ENCODE measurements at regions of chr7 and their contacts with region 1.

Region 1: GRCh38 chr7:40329601-40330153 is 194.9 kb downstream of the SUGCT start:
- DNase-seq: peak; percentile 9 to 52
- H3K4me3 ChIP-seq: no peak overlapping the region
- H3K27ac ChIP-seq: no peak overlapping the region
- H3K4me1 ChIP-seq: no peaks in the 10 kb centered on the region; the same call in 1 of the 2 replicates
- H3K27me3 ChIP-seq: no peaks in the 10 kb centered on the region
- CTCF ChIP-seq: peak; percentile 98

Region 2: DNA sequence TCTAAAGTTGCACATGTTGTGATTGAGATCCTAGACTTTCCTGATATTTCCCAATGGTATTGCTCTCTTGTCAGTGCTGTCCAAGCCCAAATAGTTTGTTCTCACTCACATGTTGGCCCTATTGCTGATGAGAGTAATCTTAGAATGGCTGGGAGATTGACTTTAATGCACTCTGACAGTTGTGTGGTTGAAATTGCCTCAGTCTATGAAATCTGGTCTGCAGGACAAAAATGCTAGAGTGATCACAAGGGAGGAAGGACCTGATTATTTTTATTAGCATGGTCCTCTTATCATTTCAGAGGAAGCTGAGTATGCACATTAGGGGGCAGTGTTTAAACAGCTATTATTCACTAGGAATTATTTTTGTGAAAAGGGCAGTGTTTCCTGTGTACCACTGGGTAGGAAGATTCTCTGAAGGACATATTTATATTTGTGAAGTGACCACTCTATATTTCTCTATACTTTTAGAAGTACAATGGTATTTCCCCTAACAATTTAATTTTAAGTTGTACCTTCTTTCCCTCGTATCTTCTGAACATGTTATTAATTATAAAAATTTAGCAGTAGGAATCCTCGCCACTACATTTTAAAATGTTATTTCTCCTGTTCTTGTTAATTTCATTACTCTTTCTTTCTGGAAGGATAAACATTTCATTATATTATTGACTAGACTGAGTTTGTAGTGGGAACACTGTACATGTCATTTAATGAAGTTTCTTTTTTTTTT is 130.4 kb before region 1 on chr7:
- CTCF ChIA-PET with region 1: no interaction called
- POLR2A ChIA-PET with region 1: no interaction called
- intact Hi-C with region 1: loop called (anchors 1 kb)
- DNase-seq: peak in 1 of 2 experiments; percentile 33
- H3K4me3 ChIP-seq: no peak overlapping the region
- H3K27ac ChIP-seq: no peak overlapping the region
- H3K4me1 ChIP-seq: no peaks in the 10 kb centered on the region
- H3K27me3 ChIP-seq: no peaks in the 10 kb centered on the region
- CTCF ChIP-seq: peak; percentile 59

Region 3: GRCh38 chr7:40604601-40605438 is 275.1 kb after region 1 on chr7:
- CTCF ChIA-PET with region 1: no interaction called
- POLR2A ChIA-PET with region 1: no interaction called
- intact Hi-C with region 1: no loop called
- DNase-seq: no peak
- H3K4me3 ChIP-seq: no peak overlapping the region
- H3K27ac ChIP-seq: no peak overlapping the region
- H3K4me1 ChIP-seq: no peaks in the 10 kb centered on the region
- H3K27me3 ChIP-seq: no peaks in the 10 kb centered on the region
- CTCF ChIP-seq: no peak

Region 4: DNA sequence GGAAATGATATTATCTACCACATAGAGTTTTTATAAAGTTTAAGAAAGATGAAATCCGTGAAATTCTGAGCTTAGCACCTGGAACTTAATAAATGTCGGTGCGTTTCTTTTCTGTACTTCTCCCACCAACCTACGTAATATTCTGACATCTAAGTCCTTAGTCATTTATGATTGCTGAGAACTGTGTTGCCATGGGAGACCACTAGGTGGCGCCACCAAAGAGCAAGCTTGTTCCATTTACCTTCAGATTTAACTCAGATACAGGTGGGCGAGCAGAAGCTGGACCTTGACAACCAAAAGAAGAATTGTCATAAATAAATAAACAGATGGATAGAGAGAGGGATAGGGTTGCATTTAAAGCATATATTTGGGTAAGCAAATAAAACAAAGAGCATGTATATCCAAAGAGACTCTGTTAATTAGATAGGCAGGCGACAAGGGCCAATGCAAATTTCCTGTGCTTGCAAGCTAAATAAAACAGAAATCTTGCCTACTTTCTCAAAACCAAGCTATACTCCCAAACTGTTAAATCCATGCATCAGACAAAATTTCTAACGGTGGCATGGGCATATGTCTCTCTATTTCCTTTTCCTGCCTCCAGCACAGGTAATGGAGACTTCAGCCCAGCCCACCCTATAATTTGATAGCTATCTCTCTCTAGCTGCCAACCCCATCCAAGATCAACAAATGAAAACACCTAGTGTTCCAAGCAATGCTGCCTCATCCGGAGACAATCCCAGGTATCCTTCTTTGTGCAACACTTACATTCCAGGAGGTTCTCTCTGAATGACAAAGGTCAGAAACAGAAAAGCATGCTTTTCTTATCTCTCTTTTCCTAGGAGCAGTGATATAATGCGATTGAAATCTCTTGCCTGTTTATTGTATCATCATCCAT is 673.6 kb after region 1 on chr7:
- CTCF ChIA-PET with region 1: no interaction called
- POLR2A ChIA-PET with region 1: no interaction called
- intact Hi-C with region 1: loop called (anchors 1 kb)
- DNase-seq: peak; percentile 59 to 90
- H3K4me3 ChIP-seq: no peak overlapping the region
- H3K27ac ChIP-seq: peak overlapping the region; percentile 10
- H3K4me1 ChIP-seq: peaks cover 54% of the 10 kb centered on the region
- H3K27me3 ChIP-seq: no peaks in the 10 kb centered on the region
- CTCF ChIP-seq: peak; percentile 95

Region 5: DNA sequence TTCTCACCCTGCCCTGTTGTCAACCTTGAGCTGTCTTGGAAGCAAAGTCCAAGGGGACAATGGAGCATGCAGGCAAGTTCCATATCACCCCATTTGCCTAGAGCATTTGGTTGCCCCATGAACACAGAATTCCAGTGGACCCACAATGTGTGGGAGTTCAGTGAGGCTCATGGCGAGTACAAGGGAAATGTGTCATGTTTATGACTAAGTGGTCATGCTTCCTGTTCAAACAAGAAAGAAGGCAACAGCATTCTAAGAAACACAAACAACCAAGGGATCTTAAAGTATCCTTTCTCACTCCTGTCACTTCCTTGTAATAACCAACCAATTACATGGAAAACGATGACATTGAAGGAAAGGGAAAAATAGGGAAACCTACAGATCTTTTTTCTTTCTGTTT is 860.2 kb after region 1 on chr7:
- CTCF ChIA-PET with region 1: no interaction called
- POLR2A ChIA-PET with region 1: no interaction called
- intact Hi-C with region 1: loop called (anchors 1 kb)
- DNase-seq: peak; percentile 61 to 99
- H3K4me3 ChIP-seq: no peak overlapping the region
- H3K27ac ChIP-seq: peak overlapping the region; percentile 93
- H3K4me1 ChIP-seq: peaks cover 46% of the 10 kb centered on the region
- H3K27me3 ChIP-seq: no peaks in the 10 kb centered on the region
- CTCF ChIP-seq: no peak

Region 6: DNA sequence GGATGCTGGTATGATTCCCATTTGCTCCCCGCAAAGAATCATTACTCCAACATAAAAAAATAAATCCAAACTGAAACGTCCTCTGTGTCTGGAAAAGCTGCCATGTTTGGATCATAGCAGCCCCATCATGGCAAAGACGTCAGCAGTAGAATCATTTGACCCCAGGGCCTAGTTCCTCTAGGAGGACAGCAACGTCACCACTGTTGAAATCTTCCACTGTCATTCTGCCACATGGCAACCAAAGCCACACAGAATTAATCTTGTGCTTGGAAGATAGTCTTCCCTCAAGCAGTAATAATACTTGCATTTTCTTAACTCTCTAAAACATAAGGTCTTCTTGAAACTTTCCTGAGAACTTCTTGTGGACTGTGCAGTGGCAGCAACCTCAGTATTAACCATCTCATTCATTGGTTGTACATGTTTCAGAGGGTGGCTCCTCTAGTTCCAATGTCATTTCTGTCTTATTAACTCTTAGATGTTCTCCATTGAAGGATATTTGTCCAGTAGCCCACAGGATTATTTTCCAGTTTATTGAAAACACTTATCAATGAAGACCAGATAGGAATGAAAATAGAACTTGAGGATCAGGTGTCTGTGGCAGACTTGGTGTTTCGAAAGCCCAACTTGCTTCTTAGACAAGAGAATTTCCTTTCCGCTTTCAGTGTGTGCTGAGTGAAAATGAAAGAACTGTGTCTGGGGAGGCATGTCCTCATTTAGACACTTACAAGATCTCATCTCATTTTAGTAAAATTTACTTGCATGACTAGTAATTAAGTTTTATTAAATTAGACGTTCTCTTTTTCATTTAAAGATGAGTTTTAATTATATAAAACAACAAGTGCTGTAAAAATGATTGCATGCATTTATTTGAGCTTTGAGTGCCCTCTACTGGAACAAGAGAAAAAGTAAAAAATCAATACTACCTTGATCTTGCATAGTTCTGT is 1402.1 kb after region 1 on chr7:
- CTCF ChIA-PET with region 1: no interaction called
- POLR2A ChIA-PET with region 1: no interaction called
- intact Hi-C with region 1: loop called (anchors 1 kb)
- DNase-seq: no peak
- H3K4me3 ChIP-seq: no peak overlapping the region
- H3K27ac ChIP-seq: no peak overlapping the region
- H3K4me1 ChIP-seq: no peaks in the 10 kb centered on the region
- H3K27me3 ChIP-seq: no peaks in the 10 kb centered on the region
- CTCF ChIP-seq: peak; percentile 93